ENCODE measurements at regions of chr21 and their contacts with region 1.

Region 1: GRCh38 chr21:31088315-31088714 is 50.0 kb upstream of the KRTAP19-8 start:
- DNase-seq: no peak
- H3K4me3 ChIP-seq: no peak overlapping the region
- H3K27ac ChIP-seq: no peak overlapping the region
- H3K4me1 ChIP-seq: no peaks in the 10 kb centered on the region
- H3K27me3 ChIP-seq: no peaks in the 10 kb centered on the region
- CTCF ChIP-seq: no peak
- POLR2A ChIP-seq: no peak

Region 2: DNA sequence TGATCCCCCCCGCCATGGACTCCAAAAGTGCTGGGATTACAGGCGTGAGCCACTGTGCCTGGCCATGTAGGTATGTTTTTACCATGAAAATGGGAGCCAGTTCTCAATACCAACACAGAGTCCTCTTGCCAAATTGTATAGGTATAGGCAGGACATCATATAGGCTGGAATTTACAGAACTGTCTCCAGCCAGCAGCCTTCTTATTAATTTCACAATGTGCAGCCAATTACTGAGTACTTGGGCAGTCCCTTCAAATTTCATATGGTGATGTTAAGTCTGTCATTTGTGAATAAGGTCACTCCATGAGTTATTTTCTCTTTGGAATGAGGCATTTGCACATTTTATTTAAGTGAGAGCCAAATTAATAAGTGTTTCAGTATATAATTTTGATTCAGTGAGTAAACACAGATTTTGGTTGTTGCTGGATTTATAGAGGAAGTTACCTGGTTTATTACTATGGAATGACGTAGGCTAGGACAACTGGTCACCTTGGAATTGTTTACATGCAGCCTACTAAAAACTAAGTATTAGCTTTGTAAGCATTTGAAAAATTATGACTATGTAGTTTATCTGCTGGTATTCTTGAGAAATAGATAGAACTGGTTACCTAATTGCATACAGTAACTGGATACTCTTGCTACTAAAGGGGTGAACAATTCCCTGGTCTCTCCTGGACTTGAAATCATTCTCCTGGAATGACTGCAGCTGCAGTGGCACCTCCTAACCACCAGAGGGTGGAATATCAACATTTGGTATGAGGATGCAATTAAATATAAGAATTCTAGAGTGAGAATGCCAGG is 747.7 kb before region 1 on chr21:
- intact Hi-C with region 1: loop called in 1 of 2 experiments (anchors 5 kb)
- DNase-seq: peak; percentile 18 to 80 (median 48)
- H3K4me3 ChIP-seq: no peak overlapping the region
- H3K27ac ChIP-seq: no peak overlapping the region
- H3K4me1 ChIP-seq: no peaks in the 10 kb centered on the region
- H3K27me3 ChIP-seq: no peaks in the 10 kb centered on the region
- CTCF ChIP-seq: peak; percentile 69 to 87 (median 76)
- POLR2A ChIP-seq: no peak

Region 3: GRCh38 chr21:30831194-30831765 is 257.0 kb before region 1 on chr21:
- intact Hi-C with region 1: loop called in 1 of 2 experiments (anchors 5 kb)
- DNase-seq: peak in 2 of 7 donors; percentile 3 to 21
- H3K4me3 ChIP-seq: no peak overlapping the region
- H3K27ac ChIP-seq: no peak overlapping the region
- H3K4me1 ChIP-seq: no peaks in the 10 kb centered on the region
- H3K27me3 ChIP-seq: no peaks in the 10 kb centered on the region
- CTCF ChIP-seq: peak in 5 of 6 experiments; percentile 14 to 46 (median 41)
- POLR2A ChIP-seq: no peak

Region 4: DNA sequence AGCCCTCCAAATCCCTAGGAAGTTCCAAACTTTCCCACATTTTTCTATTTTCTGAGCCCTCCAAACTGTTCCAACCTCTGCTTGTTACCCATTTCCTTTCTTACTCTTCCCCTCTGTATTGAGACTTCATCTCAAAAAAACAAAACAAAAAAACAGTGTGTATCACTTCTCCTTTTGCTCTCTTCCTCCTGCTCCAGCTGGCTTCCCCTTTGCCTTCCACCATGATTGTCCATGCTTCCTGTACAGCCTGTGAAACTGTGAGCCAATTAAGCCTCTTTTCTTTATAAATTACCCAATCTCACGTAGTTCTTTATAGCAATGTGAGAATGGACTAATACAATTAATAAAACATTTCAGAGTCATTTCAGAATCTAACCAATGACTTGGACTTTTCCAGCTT is 19.6 kb after region 1 on chr21:
- intact Hi-C with region 1: no loop called
- DNase-seq: peak in 1 of 7 donors; percentile 20
- H3K4me3 ChIP-seq: no peak overlapping the region
- H3K27ac ChIP-seq: peak overlapping the region in 2 of 5 donors; percentile 5 to 45
- H3K4me1 ChIP-seq: no peaks in the 10 kb centered on the region
- H3K27me3 ChIP-seq: no peaks in the 10 kb centered on the region
- CTCF ChIP-seq: no peak
- POLR2A ChIP-seq: no peak

Measured in adrenal gland (tissue), 19 donors.